Endothelial cell of umbilical vein (primary cell): ENCODE measurements at regions of chr3 and their contacts with region 1.

Region 1: GRCh38 chr3:129824926-129825541 is 68.5 kb downstream of the TMCC1 start:
- DNase-seq: peak; percentile 59
- H3K4me3 ChIP-seq: no peak overlapping the region
- H3K27ac ChIP-seq: no peak overlapping the region
- H3K4me1 ChIP-seq: peaks cover 6% of the 10 kb centered on the region
- H3K27me3 ChIP-seq: no peaks in the 10 kb centered on the region
- CTCF ChIP-seq: peak; percentile 51 to 54
- POLR2A ChIP-seq: no peak

Region 2: DNA sequence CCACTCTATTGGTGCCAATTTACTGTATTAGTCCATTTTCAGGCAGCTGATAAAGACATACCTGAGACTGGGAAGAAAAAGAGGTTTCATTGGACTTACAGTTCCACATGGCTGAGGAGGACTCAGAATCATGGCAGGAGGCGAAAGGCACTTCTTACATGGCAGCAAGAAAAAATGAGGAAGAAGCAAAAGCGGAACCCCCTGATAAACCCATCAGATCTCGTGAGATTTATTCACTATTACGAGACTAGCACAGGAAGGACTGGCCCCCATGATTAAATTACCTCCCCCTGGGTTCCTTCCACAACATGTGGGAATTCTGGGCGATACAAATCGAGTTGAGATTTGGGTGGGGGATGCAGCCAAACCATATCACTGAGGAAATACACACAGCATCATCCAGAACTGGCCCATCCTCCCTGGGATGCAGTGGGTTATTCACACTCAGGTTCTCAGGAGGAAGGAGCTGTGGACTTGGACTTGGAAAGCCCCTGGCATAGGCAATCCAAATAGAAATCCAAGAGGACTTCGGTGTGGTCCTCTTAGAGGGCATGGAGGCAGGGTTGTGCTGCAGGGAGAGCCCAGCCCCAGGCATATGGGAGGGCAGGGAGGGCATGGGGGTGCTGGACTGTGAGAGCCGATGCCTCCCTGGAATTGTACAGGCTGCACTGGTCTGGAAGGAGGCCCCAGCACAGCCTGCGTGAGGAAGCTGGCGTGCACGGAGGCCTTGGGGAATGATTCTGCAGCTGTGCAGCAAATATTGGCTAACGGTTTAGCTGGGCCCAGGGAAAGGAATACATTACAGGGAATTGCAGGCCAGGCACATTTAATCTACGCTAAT is 459.5 kb before region 1 on chr3:
- CTCF ChIA-PET with region 1: no interaction called
- POLR2A ChIA-PET with region 1: no interaction called
- dilution Hi-C with region 1: no loop called
- intact Hi-C with region 1: no loop called
- DNase-seq: no peak
- H3K4me3 ChIP-seq: no peak overlapping the region
- H3K27ac ChIP-seq: no peak overlapping the region
- H3K4me1 ChIP-seq: no peaks in the 10 kb centered on the region
- H3K27me3 ChIP-seq: no peaks in the 10 kb centered on the region
- CTCF ChIP-seq: no peak
- POLR2A ChIP-seq: no peak

Region 3: GRCh38 chr3:129809297-129809696 is 15.7 kb before region 1 on chr3:
- CTCF ChIA-PET with region 1: interaction called, 11 read pairs
- POLR2A ChIA-PET with region 1: no interaction called
- dilution Hi-C with region 1: no loop called
- intact Hi-C with region 1: no loop called
- DNase-seq: peak; percentile 49
- H3K4me3 ChIP-seq: no peak overlapping the region
- H3K27ac ChIP-seq: no peak overlapping the region
- H3K4me1 ChIP-seq: peaks cover 7% of the 10 kb centered on the region
- H3K27me3 ChIP-seq: no peaks in the 10 kb centered on the region
- CTCF ChIP-seq: no peak
- POLR2A ChIP-seq: no peak

Region 4: DNA sequence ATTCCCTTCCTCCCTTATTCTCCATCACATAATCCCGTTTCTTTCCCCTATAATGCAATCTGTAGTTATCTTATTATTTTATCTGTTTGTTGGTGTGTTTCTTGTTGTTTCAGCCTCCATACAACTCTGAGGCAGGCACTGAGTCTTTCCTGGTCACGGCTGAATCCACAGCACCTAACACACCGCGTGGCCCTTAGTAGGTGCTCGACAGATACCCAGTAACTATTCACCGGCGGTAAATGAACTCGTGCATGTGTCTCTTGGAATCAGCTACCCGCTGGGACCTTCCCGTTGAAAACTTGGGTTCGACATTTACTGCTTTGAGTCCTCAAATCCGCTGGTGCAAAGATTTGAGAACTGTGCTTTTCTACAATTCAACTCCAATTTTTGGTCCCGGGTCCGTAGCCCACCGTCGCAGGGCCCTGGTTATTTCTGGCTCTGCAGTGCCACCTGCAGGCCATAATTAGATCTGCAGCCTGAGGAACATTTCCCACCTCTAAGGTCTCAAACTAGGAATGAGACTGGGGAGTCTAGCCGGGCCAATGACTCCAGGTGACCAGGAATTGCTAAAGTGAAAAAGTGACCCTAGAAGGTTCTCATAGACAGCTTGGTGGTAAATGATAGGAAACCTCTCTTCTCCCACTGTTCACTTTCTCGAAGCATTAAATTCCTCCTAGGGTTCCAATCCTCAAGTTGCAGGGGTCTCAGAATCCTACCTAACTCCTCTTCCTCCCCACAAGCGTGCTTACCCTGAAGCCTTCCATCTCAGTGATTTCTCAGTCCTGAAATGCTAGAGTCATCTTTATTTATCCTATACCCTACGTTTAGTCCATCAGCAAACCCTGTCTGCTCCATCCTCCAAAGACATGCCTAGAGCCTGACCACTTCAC is 109.4 kb after region 1 on chr3:
- CTCF ChIA-PET with region 1: interaction called, 8 read pairs
- POLR2A ChIA-PET with region 1: no interaction called
- dilution Hi-C with region 1: no loop called
- intact Hi-C with region 1: loop called (anchors 1 kb)
- DNase-seq: peak; percentile 47
- H3K4me3 ChIP-seq: no peak overlapping the region
- H3K27ac ChIP-seq: no peak overlapping the region
- H3K4me1 ChIP-seq: peaks cover 3% of the 10 kb centered on the region
- H3K27me3 ChIP-seq: peaks cover 0 to 8% of the 10 kb centered on the region in 2 experiments
- CTCF ChIP-seq: peak; percentile 73 to 88
- POLR2A ChIP-seq: no peak